A549 (cell line): ENCODE measurements at regions of chr5 and their contacts with region 1.

Region 1: DNA sequence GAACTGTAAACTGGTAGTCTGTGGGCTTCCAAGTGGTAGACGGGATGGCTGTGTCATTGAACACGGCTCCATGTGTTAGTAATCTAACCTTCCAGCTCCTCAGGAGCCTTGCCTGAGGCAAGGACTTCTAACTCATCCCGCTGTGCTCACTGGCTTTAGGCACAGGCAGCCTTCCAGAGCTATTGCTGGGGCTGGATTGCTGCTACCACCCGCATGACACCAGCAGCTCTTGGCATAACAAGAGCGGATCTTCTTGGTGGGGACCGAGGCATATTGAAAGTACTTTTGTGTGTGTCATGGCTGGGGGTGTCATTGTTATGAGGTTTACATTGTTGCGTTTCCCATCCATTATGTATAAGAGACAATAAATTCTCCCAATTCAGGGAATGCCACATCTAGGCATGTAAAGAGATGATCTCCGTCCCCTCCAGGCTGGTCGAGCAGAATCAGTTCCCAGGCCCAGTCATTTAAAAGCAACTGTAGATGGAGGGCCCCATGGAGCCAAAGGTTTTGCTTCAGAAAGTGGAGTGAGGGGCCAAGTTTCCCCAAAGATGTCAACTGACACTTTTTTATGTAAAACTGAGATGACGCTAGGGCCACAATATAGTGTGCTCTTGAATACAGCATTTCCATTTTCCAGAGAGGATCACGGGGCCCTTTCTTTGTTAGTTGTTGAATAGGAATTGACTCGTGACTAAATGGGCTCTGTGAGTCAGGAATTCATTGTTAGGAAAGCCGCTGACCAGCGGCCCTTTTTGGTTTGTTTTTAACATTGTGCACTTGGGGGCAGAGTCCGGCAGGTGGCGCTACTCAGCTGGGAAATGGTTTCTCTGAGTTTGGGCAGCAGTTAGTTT is 759.6 kb downstream of the TAF11L14 start:
- DNase-seq: peak; percentile 25 to 41
- ATAC-seq: peak; percentile 57 to 89; a peak in 5 of 6 replicates
- H3K4me3 ChIP-seq: no peak overlapping the region
- H3K27ac ChIP-seq: no peak overlapping the region
- H3K4me1 ChIP-seq: no peaks in the 10 kb centered on the region
- CTCF ChIP-seq: peak; percentile 82
- EP300 ChIP-seq: no peak
- POLR2A ChIP-seq: no peak
- RAD21 ChIP-seq: peak; percentile 80 to 84

Region 2: DNA sequence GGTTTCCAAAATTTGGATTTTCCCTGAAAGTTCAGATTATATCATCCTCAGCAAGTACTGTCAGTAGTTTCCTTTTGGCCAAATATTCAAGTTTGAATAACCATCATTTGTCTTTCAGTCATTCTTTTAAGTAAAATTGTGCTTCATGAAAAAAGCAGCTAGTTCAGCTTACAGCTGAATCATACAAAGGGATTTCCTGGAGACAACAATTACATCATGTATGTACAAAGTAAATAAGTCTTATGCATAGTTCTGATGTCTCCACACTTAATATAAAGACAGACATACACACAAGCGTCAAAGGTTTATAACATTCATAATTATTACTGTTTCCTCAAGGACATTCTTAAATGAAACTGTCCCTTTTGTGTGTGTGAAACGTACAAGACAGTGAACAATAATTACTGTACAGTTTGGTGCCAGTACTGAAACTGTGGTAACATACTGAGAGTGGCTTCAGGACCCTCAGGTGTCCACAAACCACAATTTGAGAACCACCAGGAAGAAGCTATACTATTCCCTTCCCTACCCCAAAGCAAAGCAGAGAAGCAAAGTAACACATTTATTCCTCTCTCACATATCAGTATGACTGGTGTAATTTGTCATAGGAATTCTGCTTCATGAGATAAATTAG is 13.0 kb before region 1 on chr5:
- CTCF ChIA-PET with region 1: interaction called, 13 read pairs
- POLR2A ChIA-PET with region 1: no interaction called
- DNase-seq: no peak
- ATAC-seq: no peak
- H3K4me3 ChIP-seq: no peak overlapping the region
- H3K27ac ChIP-seq: no peak overlapping the region
- H3K4me1 ChIP-seq: no peaks in the 10 kb centered on the region
- CTCF ChIP-seq: no peak
- EP300 ChIP-seq: no peak
- POLR2A ChIP-seq: no peak
- RAD21 ChIP-seq: no peak